ENCODE measurements at regions of chr6 and their contacts with region 1.

Region 1: GRCh38 chr6:41683510-41684310 is 45.4 kb downstream of the MDFI start:
- DNase-seq: peak; percentile 71
- ATAC-seq: peak; percentile 85
- H3K4me3 ChIP-seq: no peak overlapping the region
- H3K27ac ChIP-seq: no peak overlapping the region
- H3K4me1 ChIP-seq: no peaks in the 10 kb centered on the region
- H3K27me3 ChIP-seq: no peaks in the 10 kb centered on the region
- CTCF ChIP-seq: peak; percentile 92

Region 2: GRCh38 chr6:41306187-41306854 is 377.4 kb before region 1 on chr6:
- CTCF ChIA-PET with region 1: no interaction called
- POLR2A ChIA-PET with region 1: no interaction called
- intact Hi-C with region 1: loop called (anchors 2 kb)
- DNase-seq: peak; percentile 82
- ATAC-seq: peak; percentile 53; the same call in 1 of the 2 replicates
- H3K4me3 ChIP-seq: no peak overlapping the region
- H3K27ac ChIP-seq: no peak overlapping the region
- H3K4me1 ChIP-seq: 0 out of 2 replicates have a peak, but pooled peaks cover 4% of the 10 kb centered on the region
- H3K27me3 ChIP-seq: peaks cover 10% of the 10 kb centered on the region; the same call in 1 of the 2 replicates
- CTCF ChIP-seq: peak; percentile 76

Region 3: DNA sequence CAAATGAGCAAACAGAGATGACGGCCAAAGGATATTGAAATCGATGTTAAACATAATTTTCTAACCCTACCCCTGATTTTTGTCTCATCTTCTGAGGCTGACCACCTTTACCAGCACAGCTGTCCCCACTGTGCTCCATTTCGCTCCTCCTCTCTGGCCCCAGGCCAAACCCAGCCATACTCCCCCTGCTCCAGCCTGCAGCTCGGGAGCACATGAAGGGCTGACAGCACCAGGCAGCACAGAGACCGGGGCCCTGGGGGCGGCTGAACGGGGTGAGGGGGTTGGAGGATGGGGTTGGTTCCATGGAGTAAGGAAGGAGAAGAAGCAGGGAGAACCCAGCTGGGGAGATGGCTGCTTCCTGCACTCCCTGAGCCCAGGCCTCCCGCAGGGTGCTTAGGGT is 351.5 kb before region 1 on chr6:
- CTCF ChIA-PET with region 1: no interaction called
- POLR2A ChIA-PET with region 1: no interaction called
- intact Hi-C with region 1: no loop called
- DNase-seq: no peak
- ATAC-seq: no peak
- H3K4me3 ChIP-seq: no peak overlapping the region
- H3K27ac ChIP-seq: no peak overlapping the region
- H3K4me1 ChIP-seq: no peaks in the 10 kb centered on the region
- H3K27me3 ChIP-seq: peaks cover 90% of the 10 kb centered on the region
- CTCF ChIP-seq: no peak

Region 4: GRCh38 chr6:41416501-41416837 is 267.2 kb before region 1 on chr6:
- CTCF ChIA-PET with region 1: interaction called, 11 read pairs
- POLR2A ChIA-PET with region 1: no interaction called
- intact Hi-C with region 1: no loop called
- DNase-seq: no peak
- ATAC-seq: no peak
- H3K4me3 ChIP-seq: no peak overlapping the region
- H3K27ac ChIP-seq: no peak overlapping the region
- H3K4me1 ChIP-seq: no peaks in the 10 kb centered on the region
- H3K27me3 ChIP-seq: peaks cover 98% of the 10 kb centered on the region
- CTCF ChIP-seq: no peak

Region 5: GRCh38 chr6:41424370-41425058 is 259.2 kb before region 1 on chr6:
- CTCF ChIA-PET with region 1: no interaction called
- POLR2A ChIA-PET with region 1: no interaction called
- intact Hi-C with region 1: loop called (anchors 1 kb)
- DNase-seq: peak; percentile 89
- ATAC-seq: peak; percentile 64
- H3K4me3 ChIP-seq: no peak overlapping the region
- H3K27ac ChIP-seq: no peak overlapping the region
- H3K4me1 ChIP-seq: peaks cover 15% of the 10 kb centered on the region; the same call in 1 of the 2 replicates
- H3K27me3 ChIP-seq: peaks cover 23% of the 10 kb centered on the region
- CTCF ChIP-seq: peak; percentile 88

Region 6: DNA sequence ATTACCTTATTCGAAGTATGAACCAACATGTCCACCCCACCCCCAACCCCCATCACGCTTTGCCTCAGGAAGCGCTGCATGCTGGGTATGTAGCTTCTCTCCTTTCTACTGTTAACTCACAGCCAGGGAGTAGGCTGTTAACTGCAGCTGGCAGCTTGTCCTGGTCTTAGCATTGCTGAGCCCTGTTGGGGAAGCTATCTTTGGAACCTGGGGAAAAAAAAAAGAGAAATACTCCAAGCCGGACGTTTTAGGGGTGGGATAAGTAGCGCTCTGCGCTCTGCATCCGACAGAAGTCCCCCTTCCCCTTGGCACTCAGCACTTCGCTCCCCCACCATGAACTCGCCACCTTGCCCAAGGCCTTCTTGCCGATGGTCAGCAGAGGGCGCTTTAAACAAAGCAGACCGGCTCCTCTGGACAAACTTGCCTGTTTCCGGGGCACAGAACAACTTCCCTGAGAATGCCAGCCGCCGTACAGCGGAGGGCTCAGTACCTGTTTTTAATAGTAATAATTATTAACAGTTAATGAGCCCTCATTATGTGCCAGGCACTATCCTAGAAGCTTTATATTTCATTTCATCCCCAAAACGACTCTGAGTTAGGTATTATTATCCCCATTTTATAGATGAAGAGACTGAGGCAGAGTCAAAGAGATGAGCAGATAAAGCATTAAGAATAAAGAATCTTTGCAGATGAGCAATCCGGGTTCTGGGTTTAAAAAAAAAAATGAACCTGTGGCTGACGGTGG is 80.7 kb before region 1 on chr6:
- CTCF ChIA-PET with region 1: interaction called, 12 read pairs
- POLR2A ChIA-PET with region 1: no interaction called
- intact Hi-C with region 1: loop called (anchors 1 kb)
- DNase-seq: peak; percentile 85
- ATAC-seq: peak; percentile 83
- H3K4me3 ChIP-seq: peak overlapping the region; percentile 45; the same call in 1 of the 2 replicates
- H3K27ac ChIP-seq: no peak overlapping the region
- H3K4me1 ChIP-seq: peaks cover 7% of the 10 kb centered on the region
- H3K27me3 ChIP-seq: no peaks in the 10 kb centered on the region
- CTCF ChIP-seq: peak; percentile 97